Activated T-helper 1 cell treated with anti-CD3 and anti-CD28 coated beads, Interleukin-12 subunit alpha, Interleukin-12 subunit beta, Interleukin-2, Interleukin-4 antibody, amounts not matched to agents 30 ng/mL and 10 ng/mL and 1 ng/mL, durations not matched to agents 14 hours and 24 hours and 36 hours (primary cell): ENCODE measurements at regions of chr5 and their contacts with region 1.

Region 1: GRCh38 chr5:115415143-115415491 is 118.7 kb upstream of the CCDC112 start:
- DNase-seq: no peak
- H3K4me3 Mint-ChIP-seq: no peak overlapping the region
- H3K27ac Mint-ChIP-seq: no peak overlapping the region
- H3K4me1 Mint-ChIP-seq: no peaks in the 10 kb centered on the region
- H3K27me3 Mint-ChIP-seq: peaks cover 10% of the 10 kb centered on the region

Region 2: DNA sequence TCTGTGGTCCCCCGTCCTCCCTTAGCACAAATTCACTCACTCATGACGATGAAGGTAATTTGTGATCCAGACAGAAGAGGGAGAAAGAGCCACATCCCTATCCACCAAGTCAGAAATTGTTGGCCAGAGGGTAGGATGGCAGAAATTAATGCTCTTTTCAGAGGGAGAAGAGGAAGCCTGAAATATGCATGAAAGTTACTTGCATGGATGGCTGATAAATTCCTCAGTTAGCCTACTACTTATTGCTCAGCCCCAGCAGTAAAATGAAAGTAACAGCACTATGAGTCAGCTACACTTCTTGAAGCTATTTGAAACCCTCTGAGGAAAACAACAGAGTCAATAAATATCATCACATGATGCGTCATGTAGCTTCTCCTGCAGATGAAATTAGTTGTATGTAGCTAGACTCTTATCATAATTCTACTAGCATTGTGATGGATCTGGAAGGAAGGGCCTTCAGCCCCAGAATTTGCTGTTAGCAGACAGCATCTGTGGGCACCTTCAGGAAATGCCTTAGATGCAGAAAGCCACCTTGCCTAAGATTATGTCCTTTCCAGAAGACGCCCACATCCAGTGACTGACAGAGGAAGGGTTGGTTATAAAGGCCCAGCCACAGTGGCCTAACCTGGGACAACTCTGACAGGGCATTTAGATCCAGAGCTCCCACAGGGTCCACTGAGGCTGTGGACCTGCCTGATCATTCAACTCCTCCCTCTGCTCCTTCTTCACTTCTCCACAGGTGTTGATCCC is 37.5 kb before region 1 on chr5:
- intact Hi-C with region 1: no loop called
- DNase-seq: no peak
- H3K4me3 Mint-ChIP-seq: no peak overlapping the region
- H3K27ac Mint-ChIP-seq: peak overlapping the region; percentile 5
- H3K4me1 Mint-ChIP-seq: peaks cover 29% of the 10 kb centered on the region
- H3K27me3 Mint-ChIP-seq: peaks cover 3% of the 10 kb centered on the region

Region 3: DNA sequence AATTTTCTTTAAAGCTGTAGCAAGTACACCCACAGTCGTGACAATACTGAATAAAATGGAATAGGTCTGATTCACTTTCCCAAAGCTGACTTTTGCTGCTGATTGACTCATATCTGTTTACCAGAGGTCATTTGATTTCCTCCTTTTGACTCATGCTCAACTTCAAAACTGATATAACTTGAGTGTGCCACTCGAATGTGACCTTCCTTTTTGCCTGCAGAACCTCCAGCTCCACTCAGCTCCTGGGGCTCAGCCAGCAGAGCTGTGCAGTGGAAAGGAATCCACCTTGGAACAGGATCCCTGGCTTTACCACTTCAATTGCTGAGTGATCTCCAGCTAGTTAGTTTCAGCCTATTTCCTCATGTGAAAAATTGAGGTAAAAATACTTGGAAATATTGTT is 45.4 kb after region 1 on chr5:
- intact Hi-C with region 1: loop called (anchors 1 kb)
- DNase-seq: no peak
- H3K4me3 Mint-ChIP-seq: no peak overlapping the region
- H3K27ac Mint-ChIP-seq: no peak overlapping the region
- H3K4me1 Mint-ChIP-seq: peaks cover 4% of the 10 kb centered on the region
- H3K27me3 Mint-ChIP-seq: peaks cover 17% of the 10 kb centered on the region